ENCODE measurements at regions of chr22 and their contacts with region 1.

Region 1: GRCh38 chr22:17164392-17165024 is 5.4 kb upstream of the HDHD5 start:
- DNase-seq: no peak
- ATAC-seq: no peak

Region 2: DNA sequence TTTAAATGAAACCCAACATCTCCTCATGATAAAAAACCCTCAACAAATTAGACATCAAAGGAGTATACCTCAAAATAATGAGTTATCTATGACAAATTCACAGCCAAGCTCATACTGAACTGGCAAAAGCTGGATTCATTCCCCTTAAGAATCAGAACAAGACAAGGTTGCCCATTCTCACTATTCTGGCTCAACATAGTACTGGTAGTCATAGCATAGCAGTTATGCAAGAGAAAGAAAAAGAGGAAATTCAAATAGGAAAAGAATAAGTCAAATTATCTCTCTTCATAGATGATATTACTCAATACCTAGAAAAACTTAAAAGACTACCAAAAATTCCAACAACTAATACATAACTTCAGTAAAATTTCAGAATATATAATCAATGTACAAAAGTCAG is 309.9 kb before region 1 on chr22:
- intact Hi-C with region 1: no loop called
- DNase-seq: no peak
- ATAC-seq: no peak

Region 3: GRCh38 chr22:17063411-17064106 is 100.9 kb before region 1 on chr22:
- intact Hi-C with region 1: no loop called
- DNase-seq: no peak
- ATAC-seq: no peak

Region 4: GRCh38 chr22:17131686-17132085 is 32.8 kb before region 1 on chr22:
- intact Hi-C with region 1: loop called (anchors 5 kb)
- DNase-seq: no peak
- ATAC-seq: peak; percentile 68

Region 5: GRCh38 chr22:17199003-17199731 is 34.7 kb after region 1 on chr22:
- intact Hi-C with region 1: no loop called
- DNase-seq: no peak
- ATAC-seq: peak; percentile 71

Region 6: GRCh38 chr22:17228725-17229126 is 64.2 kb after region 1 on chr22:
- intact Hi-C with region 1: no loop called
- DNase-seq: peak; percentile 15
- ATAC-seq: no peak

Measured in Right ventricle myocardium inferior (tissue), 1 donor.